SK-N-SH (cell line): ENCODE measurements at regions of chr11 and their contacts with region 1.

Region 1: GRCh38 chr11:120303004-120303637 is 22.0 kb upstream of the TLCD5 start:
- DNase-seq: peak; percentile 62
- H3K4me3 ChIP-seq: peak overlapping the region in 1 of 2 experiments; percentile 47; a peak in 1 of 4 replicates
- H3K27ac ChIP-seq: no peak overlapping the region
- H3K4me1 ChIP-seq: peaks cover 6 to 7% of the 10 kb centered on the region in 2 experiments; a peak in 1 of 4 replicates
- H3K27me3 ChIP-seq: peaks cover 3% of the 10 kb centered on the region; the same call in 1 of the 2 replicates
- CTCF ChIP-seq: peak; percentile 71
- EP300 ChIP-seq: no peak
- RAD21 ChIP-seq: peak; percentile 70

Region 2: DNA sequence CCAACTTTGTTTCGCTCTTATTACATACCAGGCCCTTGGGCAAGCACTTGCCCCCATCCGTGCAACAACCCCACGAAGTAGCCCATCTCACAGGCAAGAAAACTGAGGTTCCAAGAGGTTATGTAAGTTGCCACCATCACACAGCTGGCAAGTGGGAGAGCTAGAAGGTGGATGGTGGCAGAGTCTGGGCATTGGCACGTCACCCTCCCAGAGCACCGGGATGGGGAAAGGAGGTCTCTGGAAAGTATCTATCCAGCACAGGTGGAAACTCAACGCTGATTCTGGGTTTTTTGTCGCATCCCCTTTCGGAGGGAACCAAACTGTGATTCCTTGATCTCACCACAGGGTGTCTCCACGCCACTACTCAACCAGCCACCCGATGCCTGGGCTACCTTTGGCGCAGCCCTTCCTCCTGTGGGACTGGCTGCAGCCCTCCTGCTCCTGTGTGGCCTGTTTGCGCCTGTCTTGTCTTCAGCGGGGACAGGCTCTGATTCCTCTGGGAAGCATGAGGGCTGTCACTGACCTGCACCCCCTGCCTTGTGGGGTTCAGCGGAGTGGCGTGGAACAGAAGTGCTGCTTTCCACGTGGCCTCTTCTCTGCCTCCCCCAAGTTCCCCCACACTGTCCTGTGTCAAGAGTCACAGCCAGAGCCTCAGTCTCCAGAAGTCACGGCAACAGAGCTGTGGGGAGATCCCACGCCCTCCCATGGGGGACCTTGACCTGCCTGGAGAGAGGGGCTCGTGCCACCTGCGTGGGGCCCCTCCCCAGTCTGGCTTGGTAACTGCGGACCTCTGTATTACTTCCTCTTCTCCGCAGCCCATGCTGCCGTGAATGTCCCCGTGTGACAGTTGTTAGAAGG is 130.8 kb before region 1 on chr11:
- CTCF ChIA-PET with region 1: interaction called, 189 read pairs
- POLR2A ChIA-PET with region 1: no interaction called
- DNase-seq: peak; percentile 88
- H3K4me3 ChIP-seq: no peak overlapping the region; a peak in 1 of 4 replicates
- H3K27ac ChIP-seq: no peak overlapping the region
- H3K4me1 ChIP-seq: peaks cover 0 to 15% of the 10 kb centered on the region in 2 experiments; a peak in 1 of 4 replicates
- H3K27me3 ChIP-seq: peaks cover 25% of the 10 kb centered on the region; the same call in 1 of the 2 replicates
- CTCF ChIP-seq: peak; percentile 74
- EP300 ChIP-seq: no peak
- RAD21 ChIP-seq: peak; percentile 100

Region 3: GRCh38 chr11:120210626-120211521 is 92.2 kb before region 1 on chr11 and contains the start of gene OAF:
- CTCF ChIA-PET with region 1: interaction called, 17 read pairs
- POLR2A ChIA-PET with region 1: no interaction called
- DNase-seq: peak; percentile 90
- H3K4me3 ChIP-seq: peak within 1 kb of the TSS; percentile 68 to 69
- H3K27ac ChIP-seq: peak within 1 kb of the TSS in 1 of 2 experiments; percentile 40; a peak in 1 of 4 replicates
- H3K4me1 ChIP-seq: peaks cover 16 to 33% of the 10 kb centered on the region in 2 experiments; a peak in 3 of 4 replicates
- H3K27me3 ChIP-seq: no peaks in the 10 kb centered on the region
- CTCF ChIP-seq: peak; percentile 28; the same call in 1 of the 2 replicates
- EP300 ChIP-seq: no peak
- RAD21 ChIP-seq: no peak
- polyA plus RNA-seq, gene OAF: 27.6 and 28.0 TPM in 2 replicates

Region 4: GRCh38 chr11:120248551-120249278 is 54.4 kb before region 1 on chr11:
- CTCF ChIA-PET with region 1: interaction called, 143 read pairs
- POLR2A ChIA-PET with region 1: no interaction called
- DNase-seq: no peak
- H3K4me3 ChIP-seq: no peak overlapping the region
- H3K27ac ChIP-seq: no peak overlapping the region; a peak in 1 of 4 replicates
- H3K4me1 ChIP-seq: peaks cover 6 to 12% of the 10 kb centered on the region in 2 experiments; a peak in 3 of 4 replicates
- H3K27me3 ChIP-seq: peaks cover 5% of the 10 kb centered on the region; the same call in 1 of the 2 replicates
- CTCF ChIP-seq: no peak
- EP300 ChIP-seq: no peak
- RAD21 ChIP-seq: no peak

Region 5: GRCh38 chr11:120273448-120273847 is 29.7 kb before region 1 on chr11:
- CTCF ChIA-PET with region 1: interaction called, 21 read pairs
- POLR2A ChIA-PET with region 1: no interaction called
- DNase-seq: no peak
- H3K4me3 ChIP-seq: no peak overlapping the region
- H3K27ac ChIP-seq: no peak overlapping the region
- H3K4me1 ChIP-seq: peaks cover 0 to 5% of the 10 kb centered on the region in 2 experiments; a peak in 1 of 4 replicates
- H3K27me3 ChIP-seq: no peaks in the 10 kb centered on the region; the same call in 1 of the 2 replicates
- CTCF ChIP-seq: no peak
- EP300 ChIP-seq: no peak
- RAD21 ChIP-seq: no peak

Region 6: GRCh38 chr11:120316842-120317688 is 13.9 kb after region 1 on chr11:
- CTCF ChIA-PET with region 1: interaction called, 17 read pairs
- POLR2A ChIA-PET with region 1: no interaction called
- DNase-seq: no peak
- H3K4me3 ChIP-seq: no peak overlapping the region
- H3K27ac ChIP-seq: no peak overlapping the region
- H3K4me1 ChIP-seq: no peaks in the 10 kb centered on the region; a peak in 1 of 4 replicates
- H3K27me3 ChIP-seq: no peaks in the 10 kb centered on the region
- CTCF ChIP-seq: no peak
- EP300 ChIP-seq: no peak
- RAD21 ChIP-seq: no peak

Region 7: GRCh38 chr11:120335908-120336640 is 33.0 kb after region 1 on chr11 and contains the start of gene ARHGEF12:
- CTCF ChIA-PET with region 1: interaction called, 10 read pairs
- POLR2A ChIA-PET with region 1: no interaction called
- DNase-seq: peak; percentile 98
- H3K4me3 ChIP-seq: peak within 1 kb of the TSS; percentile 91 to 93
- H3K27ac ChIP-seq: peak within 1 kb of the TSS; percentile 81 to 92
- H3K4me1 ChIP-seq: peaks cover 13 to 34% of the 10 kb centered on the region in 2 experiments
- H3K27me3 ChIP-seq: no peaks in the 10 kb centered on the region
- CTCF ChIP-seq: peak; percentile 73
- EP300 ChIP-seq: peak; percentile 41 to 61; a peak in 1 of 4 replicates
- RAD21 ChIP-seq: no peak
- polyA plus RNA-seq, gene ARHGEF12: 12.3 and 15.9 TPM in 2 replicates